Colonic mucosa (tissue), 4 donors: ENCODE measurements at regions of chr1 and their contacts with region 1.

Region 1: DNA sequence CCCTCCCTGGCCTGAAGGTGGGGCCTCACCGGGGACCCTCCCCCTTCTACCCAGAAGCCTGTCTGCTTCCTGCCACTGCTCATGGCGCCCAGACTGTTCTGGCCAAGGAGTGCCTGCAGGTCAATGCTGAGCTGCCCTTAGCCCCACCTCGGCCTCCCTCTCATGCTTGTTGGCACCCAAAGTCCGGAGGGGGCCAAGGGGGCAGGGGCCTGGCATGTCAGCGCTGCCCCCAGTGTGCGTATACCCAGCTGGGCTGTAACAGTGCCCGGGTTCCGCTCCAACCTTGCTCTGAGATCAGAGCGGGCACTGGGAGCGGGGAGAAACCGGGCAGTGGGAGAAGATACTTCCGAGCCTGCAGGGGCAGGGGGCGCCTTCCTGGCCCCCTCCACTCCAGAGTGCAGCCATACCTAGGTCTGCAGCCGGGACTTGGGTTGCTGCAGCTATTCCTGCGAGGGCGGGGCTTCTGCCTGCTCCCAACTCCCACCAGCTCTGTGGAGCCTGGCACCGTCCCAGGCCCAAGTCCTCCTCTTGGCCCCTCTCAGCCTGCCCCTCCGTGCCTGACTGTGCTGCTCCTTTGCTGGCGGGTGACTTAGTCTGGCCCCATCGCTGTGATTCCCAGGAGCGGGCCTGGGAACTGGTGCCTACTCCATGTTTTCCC is 21.4 kb upstream of the TGFB2 start:
- DNase-seq: no peak
- H3K4me3 ChIP-seq: no peak overlapping the region
- H3K27ac ChIP-seq: no peak overlapping the region
- H3K4me1 ChIP-seq: no peaks in the 10 kb centered on the region
- H3K27me3 ChIP-seq: no peaks in the 10 kb centered on the region
- CTCF ChIP-seq: no peak

Region 2: GRCh38 chr1:218447010-218447689 is 123.5 kb after region 1 on chr1:
- intact Hi-C with region 1: no loop called
- DNase-seq: no peak
- H3K4me3 ChIP-seq: no peak overlapping the region
- H3K27ac ChIP-seq: no peak overlapping the region
- H3K4me1 ChIP-seq: no peaks in the 10 kb centered on the region
- H3K27me3 ChIP-seq: no peaks in the 10 kb centered on the region
- CTCF ChIP-seq: no peak

Region 3: DNA sequence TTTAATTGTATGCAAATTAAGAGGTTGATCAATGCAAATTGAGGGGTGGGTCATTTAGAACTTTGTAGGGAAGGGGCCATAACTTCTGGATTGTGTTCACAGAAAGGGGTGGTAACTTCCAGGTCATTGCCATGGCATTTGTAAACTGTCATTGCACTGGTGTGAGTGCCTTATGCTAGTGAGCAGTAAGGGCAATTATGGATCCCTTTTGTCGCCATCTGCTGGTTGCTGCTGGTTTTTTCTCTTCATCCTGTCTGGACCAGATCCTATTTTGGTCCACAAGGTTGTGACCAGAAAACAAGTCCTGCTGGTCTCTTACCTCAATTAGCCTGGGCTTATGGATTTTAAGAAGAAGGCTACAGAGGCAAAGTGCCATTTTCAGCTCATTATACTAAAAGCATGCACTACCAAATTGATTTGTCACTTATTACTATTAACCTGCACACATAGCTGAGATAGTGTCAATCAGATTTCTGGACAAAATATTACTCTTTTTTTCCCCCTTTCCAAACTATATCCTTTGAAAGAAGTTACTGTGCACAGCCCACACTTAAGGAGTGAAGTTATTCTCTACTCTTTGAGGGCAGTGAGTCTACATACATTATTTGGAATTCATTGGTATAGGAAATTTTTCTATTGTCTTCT is 1093.0 kb after region 1 on chr1:
- intact Hi-C with region 1: loop called (anchors 10 kb)
- DNase-seq: peak; percentile 71
- H3K4me3 ChIP-seq: no peak overlapping the region
- H3K27ac ChIP-seq: no peak overlapping the region
- H3K4me1 ChIP-seq: no peaks in the 10 kb centered on the region
- H3K27me3 ChIP-seq: no peaks in the 10 kb centered on the region
- CTCF ChIP-seq: peak; percentile 70

Region 4: GRCh38 chr1:219660666-219661463 is 1337.2 kb after region 1 on chr1:
- intact Hi-C with region 1: loop called (anchors 10 kb)
- DNase-seq: peak; percentile 82
- H3K4me3 ChIP-seq: no peak overlapping the region
- H3K27ac ChIP-seq: no peak overlapping the region
- H3K4me1 ChIP-seq: no peaks in the 10 kb centered on the region
- H3K27me3 ChIP-seq: no peaks in the 10 kb centered on the region
- CTCF ChIP-seq: peak; percentile 34

Region 5: DNA sequence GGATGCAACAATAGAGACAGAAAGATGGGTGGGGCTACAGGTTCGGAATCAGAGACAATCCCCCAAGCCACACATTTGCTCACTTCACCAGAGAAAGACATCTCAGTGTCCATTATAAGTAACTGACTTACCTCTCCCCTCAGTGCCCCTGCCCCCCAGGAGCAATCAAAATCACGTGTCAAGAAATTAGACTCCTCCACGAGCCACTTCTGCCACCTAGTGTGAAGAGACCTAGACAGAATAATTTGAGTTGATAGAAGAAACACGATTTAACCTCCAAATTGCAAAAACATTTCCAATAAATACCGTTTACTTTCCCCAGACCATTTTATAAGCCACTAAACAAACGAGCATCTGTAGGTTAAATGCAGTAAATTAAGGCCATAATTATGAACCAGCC is 1481.5 kb after region 1 on chr1:
- intact Hi-C with region 1: no loop called
- DNase-seq: no peak
- H3K4me3 ChIP-seq: no peak overlapping the region
- H3K27ac ChIP-seq: no peak overlapping the region
- H3K4me1 ChIP-seq: no peaks in the 10 kb centered on the region
- H3K27me3 ChIP-seq: no peaks in the 10 kb centered on the region
- CTCF ChIP-seq: no peak